Activated CD8-positive, alpha-beta memory T cell treated with anti-CD3 and anti-CD28 coated beads, Interleukin-2, amount 10 ng/mL, durations not matched to agents 7 days and 5 days (primary cell): ENCODE measurements at regions of chr10 and their contacts with region 1.

Region 1: GRCh38 chr10:100998991-100999741 is 442 bp upstream of the LZTS2 start:
- DNase-seq: peak; percentile 79
- ATAC-seq: peak; percentile 68
- H3K4me3 Mint-ChIP-seq: peak overlapping the region; percentile 76
- H3K27ac Mint-ChIP-seq: peak overlapping the region; percentile 80
- H3K4me1 Mint-ChIP-seq: peaks cover 22% of the 10 kb centered on the region
- H3K27me3 Mint-ChIP-seq: no peaks in the 10 kb centered on the region

Region 2: DNA sequence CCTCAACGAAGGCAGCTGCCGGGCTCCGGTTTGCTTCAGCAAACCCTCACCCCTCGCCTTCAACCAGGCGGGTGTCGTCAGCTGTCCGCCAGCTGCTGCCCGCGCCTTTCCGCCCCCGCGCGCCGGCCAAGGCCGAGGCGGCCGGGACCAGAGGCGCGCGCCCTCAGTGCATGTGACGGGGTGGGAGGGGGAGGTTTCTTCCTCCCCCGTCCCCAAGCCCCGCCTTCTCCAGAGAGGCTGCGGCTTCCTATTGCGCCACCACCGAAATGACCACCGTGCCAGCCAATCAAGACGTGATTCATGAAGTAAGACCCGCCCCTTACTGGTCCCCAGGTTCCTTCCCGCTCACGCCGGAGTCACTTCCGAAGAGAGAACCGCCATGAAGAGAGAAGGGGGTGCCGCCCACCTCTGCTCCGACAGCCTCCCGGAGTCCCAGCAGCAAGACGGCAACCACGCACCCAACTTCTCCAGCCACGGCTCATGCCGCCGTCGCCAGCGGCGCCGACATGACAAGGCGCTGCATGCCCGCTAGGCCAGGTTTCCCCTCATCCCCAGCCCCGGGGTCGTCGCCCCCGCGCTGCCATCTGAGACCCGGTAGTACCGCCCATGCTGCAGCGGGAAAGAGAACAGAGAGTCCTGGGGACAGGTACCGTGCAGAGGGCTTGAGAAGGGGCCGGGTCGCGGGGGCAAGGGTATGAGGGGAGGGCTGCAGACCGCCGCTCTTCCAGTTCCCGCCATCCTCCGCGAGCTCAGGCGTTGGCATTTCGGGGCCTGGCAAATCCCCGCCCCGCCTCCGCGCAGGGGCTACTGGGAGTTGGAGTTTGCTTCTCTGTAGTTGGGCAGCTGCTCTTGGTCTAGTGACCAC is 86.3 kb before region 1 on chr10 and contains the start of gene SLF2:
- CTCF ChIA-PET with region 1: interaction called, 15 read pairs
- DNase-seq: peak; percentile 98
- ATAC-seq: peak; percentile 95
- H3K4me3 Mint-ChIP-seq: peak within 1 kb of the TSS; percentile 99
- H3K27ac Mint-ChIP-seq: peak within 1 kb of the TSS; percentile 98
- H3K4me1 Mint-ChIP-seq: peaks cover 54% of the 10 kb centered on the region
- H3K27me3 Mint-ChIP-seq: peaks cover 3% of the 10 kb centered on the region
- total RNA-seq, gene SLF2: 41.4 to 53.0 TPM

Region 3: GRCh38 chr10:100986952-100987750 is 12.0 kb before region 1 on chr10 and contains the starts of genes MRPL43 and TWNK:
- CTCF ChIA-PET with region 1: interaction called, 41 read pairs
- DNase-seq: peak; percentile 90
- ATAC-seq: peak; percentile 97
- H3K4me3 Mint-ChIP-seq: peak within 1 kb of the TSS; percentile 91
- H3K27ac Mint-ChIP-seq: peak within 1 kb of the TSS; percentile 85
- H3K4me1 Mint-ChIP-seq: peaks cover 37% of the 10 kb centered on the region
- H3K27me3 Mint-ChIP-seq: no peaks in the 10 kb centered on the region
- total RNA-seq, gene MRPL43: 48.2 to 52.2 TPM
- total RNA-seq, gene TWNK: 11.2 to 18.7 TPM

Region 4: GRCh38 chr10:101031128-101031795 is 32.1 kb after region 1 on chr10 and contains the starts of genes PDZD7 and SFXN3:
- CTCF ChIA-PET with region 1: interaction called, 49 read pairs
- DNase-seq: peak; percentile 97
- ATAC-seq: peak; percentile 89
- H3K4me3 Mint-ChIP-seq: peak within 1 kb of the TSS; percentile 85
- H3K27ac Mint-ChIP-seq: peak within 1 kb of the TSS; percentile 91
- H3K4me1 Mint-ChIP-seq: peaks cover 15% of the 10 kb centered on the region
- H3K27me3 Mint-ChIP-seq: peaks cover 18% of the 10 kb centered on the region
- total RNA-seq, gene PDZD7: 0.59 to 1.2 TPM
- total RNA-seq, gene SFXN3: 38.2 to 48.8 TPM

Region 5: DNA sequence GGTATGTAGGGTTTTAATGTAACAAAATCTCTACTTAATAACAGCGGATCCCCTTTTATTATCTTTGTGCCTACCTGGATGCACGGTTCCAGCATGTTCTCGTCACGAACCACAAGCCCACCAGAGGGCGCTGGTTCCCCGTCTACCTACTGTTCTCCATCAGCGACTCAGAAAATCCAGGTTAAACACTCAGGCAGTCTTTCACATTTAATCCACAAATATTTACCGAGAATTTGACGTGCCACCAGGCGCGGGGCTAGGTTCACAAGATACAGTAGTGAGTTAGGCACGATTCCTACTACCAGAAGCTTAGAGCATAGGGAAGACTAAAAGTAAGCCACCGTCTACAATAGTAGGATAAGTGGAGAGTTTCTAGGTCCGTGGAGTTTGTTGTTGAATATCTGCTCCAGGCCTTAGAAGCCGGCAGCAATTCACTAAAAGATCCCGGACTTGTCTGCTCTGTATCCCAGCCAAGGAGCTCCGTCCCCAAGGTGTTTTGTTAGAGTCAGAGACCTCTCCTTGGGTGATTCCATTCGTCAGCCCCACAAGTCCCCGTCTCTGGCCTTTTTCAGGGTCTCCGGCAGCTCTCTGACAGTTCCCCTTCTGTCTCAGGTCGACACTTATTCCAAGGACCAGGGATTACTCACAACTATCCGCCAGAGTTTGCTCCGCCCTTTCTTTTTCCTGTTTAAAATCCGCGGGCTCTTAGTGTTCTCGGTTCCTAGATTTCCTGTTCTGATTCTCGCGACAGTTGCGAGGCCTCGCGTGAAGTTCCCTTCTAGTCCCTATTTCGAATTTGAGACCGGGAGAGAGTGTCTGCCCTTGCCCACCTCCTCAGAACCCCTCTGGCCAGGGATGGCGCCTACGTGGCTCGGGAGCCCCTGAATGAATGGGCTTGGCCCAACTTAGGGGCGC is 61.1 kb after region 1 on chr10:
- CTCF ChIA-PET with region 1: interaction called, 10 read pairs
- DNase-seq: peak; percentile 93
- ATAC-seq: peak; percentile 71
- H3K4me3 Mint-ChIP-seq: peak overlapping the region; percentile 86
- H3K27ac Mint-ChIP-seq: peak overlapping the region; percentile 90
- H3K4me1 Mint-ChIP-seq: peaks cover 43% of the 10 kb centered on the region
- H3K27me3 Mint-ChIP-seq: peaks cover 31% of the 10 kb centered on the region